Heart left ventricle (tissue), 16 donors: ENCODE measurements at regions of chr1 and their contacts with region 1.

Region 1: GRCh38 chr1:36279110-36279788 is 26.9 kb upstream of the SH3D21 start:
- DNase-seq: no peak
- ATAC-seq: peak; percentile 52 to 84 (median 76)
- H3K4me3 ChIP-seq: no peak overlapping the region
- H3K27ac ChIP-seq: peak overlapping the region; percentile 50 to 90 (median 79)
- H3K4me1 ChIP-seq: peaks cover 0 to 71% (median 39%) of the 10 kb centered on the region in 12 donors
- H3K27me3 ChIP-seq: no peaks in the 10 kb centered on the region
- CTCF ChIP-seq: no peak
- POLR2A ChIP-seq: no peak

Region 2: DNA sequence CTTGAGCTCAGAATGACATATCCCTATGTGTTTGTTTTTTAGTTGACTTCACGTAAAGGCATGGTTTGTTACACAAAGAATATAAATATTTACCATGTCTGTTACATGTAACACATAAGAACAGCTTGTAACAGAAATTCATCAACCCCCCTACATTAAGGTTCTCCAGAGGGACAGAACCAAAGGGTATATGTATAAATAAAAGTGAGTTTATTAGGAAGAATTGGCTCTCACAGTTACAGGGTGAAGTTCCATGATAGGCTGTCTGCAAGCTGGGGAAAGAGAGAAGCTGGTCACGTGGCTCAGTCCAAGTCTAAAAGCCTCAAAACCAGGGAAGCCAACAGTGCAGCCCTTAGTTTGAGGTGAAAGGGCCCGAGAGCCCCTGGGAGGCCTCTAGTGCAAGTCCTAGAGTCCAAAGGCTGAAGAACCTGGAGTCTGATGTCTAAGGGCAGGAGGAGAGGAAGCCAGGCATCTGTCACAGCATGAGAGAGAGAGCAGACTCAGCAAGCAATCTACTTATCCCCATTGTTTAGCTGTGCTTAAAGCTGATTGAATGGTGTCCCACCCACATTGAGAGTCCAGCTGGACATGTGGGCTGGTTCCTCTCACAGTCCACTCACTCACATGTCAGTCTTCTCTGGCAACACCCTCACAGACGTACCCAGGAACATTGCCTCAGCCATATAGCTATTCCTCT is 39.2 kb before region 1 on chr1:
- intact Hi-C with region 1: loop called in 5 of 10 experiments (anchors 5 to 10 kb)
- DNase-seq: peak in 4 of 5 donors; percentile 63 to 81 (median 79)
- ATAC-seq: peak; percentile 93 to 98 (median 96)
- H3K4me3 ChIP-seq: no peak overlapping the region
- H3K27ac ChIP-seq: peak overlapping the region in 11 of 12 donors; percentile 24 to 72 (median 60)
- H3K4me1 ChIP-seq: peaks cover 0 to 82% (median 67%) of the 10 kb centered on the region in 12 donors
- H3K27me3 ChIP-seq: no peaks in the 10 kb centered on the region
- CTCF ChIP-seq: no peak
- POLR2A ChIP-seq: no peak

Region 3: DNA sequence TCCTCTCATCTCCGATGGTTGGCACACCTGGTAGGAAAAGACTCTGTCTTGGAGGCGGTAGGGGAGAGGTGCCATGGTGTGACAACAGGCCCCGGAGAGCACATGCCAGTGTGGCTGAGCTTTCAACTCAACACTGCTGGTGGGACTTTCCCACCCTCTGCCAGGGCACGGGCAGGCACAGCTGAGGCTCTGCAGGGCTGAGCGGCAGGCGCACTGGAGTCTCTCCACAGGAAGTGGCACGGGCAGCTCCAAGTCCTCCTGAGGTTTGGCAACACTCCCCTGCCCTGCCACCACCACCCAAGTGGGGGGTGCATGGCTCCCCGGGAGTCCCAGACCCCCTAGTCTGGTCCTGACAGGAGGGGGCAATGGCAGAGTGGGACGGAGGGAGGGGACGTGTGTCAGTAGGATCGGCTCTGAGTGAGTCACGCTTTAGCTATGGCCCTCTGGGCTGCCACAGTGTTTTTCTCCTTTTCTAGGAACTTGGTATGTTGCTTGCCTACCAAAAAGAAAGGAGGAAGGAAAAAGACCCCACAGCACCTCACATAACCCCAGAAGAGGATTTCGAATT is 71.5 kb after region 1 on chr1:
- intact Hi-C with region 1: no loop called
- DNase-seq: peak in 1 of 5 donors; percentile 60
- ATAC-seq: peak in 3 of 4 donors; percentile 38 to 72 (median 60)
- H3K4me3 ChIP-seq: peak overlapping the region in 1 of 12 donors; percentile 34
- H3K27ac ChIP-seq: peak overlapping the region in 11 of 12 donors; percentile 13 to 82 (median 61)
- H3K4me1 ChIP-seq: peaks cover 0 to 44% (median 28%) of the 10 kb centered on the region in 12 donors
- H3K27me3 ChIP-seq: no peaks in the 10 kb centered on the region
- CTCF ChIP-seq: no peak
- POLR2A ChIP-seq: no peak